Activated B cell treated with CpG ODN at 0.5 μM for 24 hours (primary cell): ENCODE measurements at regions of chr7 and their contacts with region 1.

Region 1: GRCh38 chr7:3042861-3043489 is 692 bp downstream of the CARD11 start:
- DNase-seq: peak; percentile 66
- ATAC-seq: peak; percentile 65
- H3K4me3 Mint-ChIP-seq: peak overlapping the region; percentile 97
- H3K27ac Mint-ChIP-seq: peak overlapping the region; percentile 96
- H3K4me1 Mint-ChIP-seq: peaks cover 49% of the 10 kb centered on the region
- H3K27me3 Mint-ChIP-seq: no peaks in the 10 kb centered on the region
- CTCF ChIP-seq: no peak

Region 2: DNA sequence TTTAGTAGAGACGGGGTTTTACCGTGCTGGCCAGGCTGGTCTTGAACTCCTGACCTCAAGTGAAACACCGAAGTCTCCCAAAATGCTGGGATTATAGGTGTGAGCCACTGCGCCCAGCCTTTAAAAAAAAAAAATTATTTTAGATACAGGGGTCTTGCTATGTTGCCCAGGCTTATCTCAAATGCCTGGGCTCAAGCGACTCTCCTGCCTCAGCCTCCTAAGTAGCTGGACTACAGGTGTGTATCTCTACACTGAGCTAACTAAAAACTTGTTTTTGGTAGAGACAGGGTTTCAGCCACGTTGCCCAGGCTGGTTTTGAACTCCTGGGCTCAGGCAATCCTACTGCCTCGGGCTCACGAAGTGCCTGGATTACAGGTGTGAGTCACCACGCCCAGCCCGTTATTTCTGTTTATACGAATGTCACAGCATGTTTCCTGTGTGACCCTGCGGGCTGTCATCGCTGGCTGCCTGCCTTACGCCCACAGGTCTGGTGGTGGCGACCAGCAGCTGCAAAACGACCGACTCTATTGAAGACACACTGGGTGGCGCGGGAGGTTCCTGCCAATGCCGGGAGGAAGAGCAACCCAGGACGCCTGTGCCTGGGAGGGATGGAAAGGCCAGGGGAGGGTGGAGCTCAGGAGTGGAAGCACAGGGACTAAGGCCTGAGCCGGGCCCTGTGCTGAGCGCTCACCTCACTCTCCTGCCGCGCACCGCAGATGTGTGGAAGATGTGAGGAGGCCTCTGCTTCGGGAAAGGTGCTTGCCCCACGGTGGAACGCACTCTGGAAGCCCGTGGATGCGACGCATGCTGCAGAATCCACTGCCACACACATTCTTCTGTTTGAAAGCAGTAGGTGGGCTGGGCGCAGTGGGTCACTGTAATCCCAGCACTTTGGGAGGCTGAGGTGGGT is 322.1 kb before region 1 on chr7:
- CTCF ChIA-PET with region 1: no interaction called
- POLR2A ChIA-PET with region 1: no interaction called
- intact Hi-C with region 1: loop called (anchors 5 kb)
- DNase-seq: peak; percentile 57
- ATAC-seq: peak; percentile 82
- H3K4me3 Mint-ChIP-seq: peak overlapping the region; percentile 26
- H3K27ac Mint-ChIP-seq: peak overlapping the region; percentile 84
- H3K4me1 Mint-ChIP-seq: peaks cover 56% of the 10 kb centered on the region
- H3K27me3 Mint-ChIP-seq: no peaks in the 10 kb centered on the region
- CTCF ChIP-seq: no peak

Region 3: DNA sequence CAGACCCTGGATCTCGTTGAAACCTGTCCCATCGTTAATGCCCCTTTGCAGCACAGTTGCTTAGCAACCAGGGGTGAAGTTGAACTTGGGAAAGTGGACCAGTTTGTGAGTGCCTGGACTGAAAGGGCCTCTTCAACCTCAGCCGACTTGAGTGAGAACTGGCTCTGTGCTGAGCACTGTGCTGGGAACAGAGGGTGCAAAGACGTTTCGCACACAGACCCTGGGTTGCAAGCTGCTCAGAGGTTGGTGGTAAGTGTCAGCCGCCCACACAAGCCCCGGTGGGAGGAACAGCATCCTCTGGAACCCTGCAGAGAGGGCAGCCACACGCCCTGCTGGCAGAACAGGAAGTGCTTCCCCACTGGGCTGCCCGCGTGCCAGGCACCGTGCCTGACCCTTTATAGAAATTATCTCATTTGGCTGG is 88.5 kb before region 1 on chr7:
- CTCF ChIA-PET with region 1: no interaction called
- POLR2A ChIA-PET with region 1: no interaction called
- intact Hi-C with region 1: loop called (anchors 1 kb)
- DNase-seq: no peak
- ATAC-seq: peak; percentile 53
- H3K4me3 Mint-ChIP-seq: peak overlapping the region; percentile 19
- H3K27ac Mint-ChIP-seq: peak overlapping the region; percentile 70
- H3K4me1 Mint-ChIP-seq: peaks cover 63% of the 10 kb centered on the region
- H3K27me3 Mint-ChIP-seq: no peaks in the 10 kb centered on the region
- CTCF ChIP-seq: no peak

Region 4: GRCh38 chr7:3011211-3011852 is 31.6 kb before region 1 on chr7:
- CTCF ChIA-PET with region 1: no interaction called
- POLR2A ChIA-PET with region 1: no interaction called
- intact Hi-C with region 1: no loop called
- DNase-seq: no peak
- ATAC-seq: no peak
- H3K4me3 Mint-ChIP-seq: no peak overlapping the region
- H3K27ac Mint-ChIP-seq: peak overlapping the region; percentile 32
- H3K4me1 Mint-ChIP-seq: peaks cover 58% of the 10 kb centered on the region
- H3K27me3 Mint-ChIP-seq: no peaks in the 10 kb centered on the region
- CTCF ChIP-seq: no peak

Region 5: DNA sequence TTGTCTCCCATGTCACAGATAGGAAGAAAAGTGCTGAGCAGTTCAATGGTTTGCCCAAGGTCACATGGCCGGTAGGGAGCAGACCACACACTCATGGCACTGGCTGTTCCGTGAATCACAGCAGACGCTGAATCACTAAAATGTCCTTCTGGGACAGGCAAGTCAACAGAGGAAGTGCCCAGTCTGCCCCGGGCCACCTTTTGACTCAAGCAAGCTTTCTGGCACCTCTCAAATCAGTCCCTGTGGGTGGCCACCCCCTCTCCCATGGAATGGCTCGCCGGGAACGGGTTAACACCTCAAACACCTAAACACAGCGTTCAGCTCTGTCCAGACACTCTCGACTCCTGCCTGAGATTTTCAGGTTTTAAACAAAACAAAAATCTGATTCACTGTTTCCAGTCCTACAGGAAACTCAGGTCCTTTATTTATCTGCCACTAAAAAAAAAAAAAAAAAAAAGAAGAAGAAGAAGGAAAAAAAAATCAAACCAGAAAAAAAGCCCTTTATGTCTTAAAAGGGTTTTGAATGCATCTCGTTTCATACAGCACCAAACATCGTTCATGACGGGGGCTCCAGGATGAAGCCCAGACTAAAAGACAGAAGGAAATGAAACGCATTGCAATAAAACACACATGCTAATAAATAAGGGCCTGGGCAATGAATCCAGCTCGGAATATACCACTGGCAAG is 14.8 kb before region 1 on chr7:
- CTCF ChIA-PET with region 1: interaction called, 3 read pairs
- POLR2A ChIA-PET with region 1: interaction called, 11 read pairs
- intact Hi-C with region 1: no loop called
- DNase-seq: no peak
- ATAC-seq: peak; percentile 25
- H3K4me3 Mint-ChIP-seq: peak overlapping the region; percentile 20
- H3K27ac Mint-ChIP-seq: peak overlapping the region; percentile 59
- H3K4me1 Mint-ChIP-seq: peaks cover 46% of the 10 kb centered on the region
- H3K27me3 Mint-ChIP-seq: no peaks in the 10 kb centered on the region
- CTCF ChIP-seq: no peak

Region 6: DNA sequence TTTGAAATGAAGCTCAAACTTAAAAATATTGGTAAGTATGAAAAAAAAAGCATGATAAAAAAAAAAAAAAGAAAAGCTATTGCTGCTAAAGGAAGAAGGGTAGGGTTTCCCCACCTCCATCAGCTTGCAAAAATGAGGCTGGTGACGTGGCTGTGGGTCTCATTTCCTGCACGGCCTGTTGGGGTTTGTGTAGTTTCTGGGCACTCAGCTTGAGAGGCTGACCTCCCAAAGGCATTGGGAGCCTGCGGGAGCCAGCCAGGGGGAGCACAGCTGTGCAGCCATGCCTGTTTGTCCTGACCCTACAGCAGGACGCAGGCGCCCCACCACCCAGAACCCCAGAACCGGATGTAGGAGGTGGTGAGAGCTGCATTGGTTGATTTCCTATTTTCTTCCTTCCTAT is 49.5 kb after region 1 on chr7:
- CTCF ChIA-PET with region 1: interaction called, 3 read pairs
- POLR2A ChIA-PET with region 1: interaction called, 7 read pairs
- intact Hi-C with region 1: loop called (anchors 1 kb)
- DNase-seq: peak; percentile 54
- ATAC-seq: peak; percentile 84
- H3K4me3 Mint-ChIP-seq: peak overlapping the region; percentile 15
- H3K27ac Mint-ChIP-seq: peak overlapping the region; percentile 83
- H3K4me1 Mint-ChIP-seq: peaks cover 52% of the 10 kb centered on the region
- H3K27me3 Mint-ChIP-seq: no peaks in the 10 kb centered on the region
- CTCF ChIP-seq: no peak

Region 7: GRCh38 chr7:3232228-3232627 is 189.3 kb after region 1 on chr7:
- CTCF ChIA-PET with region 1: no interaction called
- POLR2A ChIA-PET with region 1: interaction called, 13 read pairs
- intact Hi-C with region 1: no loop called
- DNase-seq: no peak
- ATAC-seq: no peak
- H3K4me3 Mint-ChIP-seq: no peak overlapping the region
- H3K27ac Mint-ChIP-seq: no peak overlapping the region
- H3K4me1 Mint-ChIP-seq: no peaks in the 10 kb centered on the region
- H3K27me3 Mint-ChIP-seq: peaks cover 5% of the 10 kb centered on the region
- CTCF ChIP-seq: no peak